ENCODE measurements at regions of chr14 and their contacts with region 1.

Region 1: DNA sequence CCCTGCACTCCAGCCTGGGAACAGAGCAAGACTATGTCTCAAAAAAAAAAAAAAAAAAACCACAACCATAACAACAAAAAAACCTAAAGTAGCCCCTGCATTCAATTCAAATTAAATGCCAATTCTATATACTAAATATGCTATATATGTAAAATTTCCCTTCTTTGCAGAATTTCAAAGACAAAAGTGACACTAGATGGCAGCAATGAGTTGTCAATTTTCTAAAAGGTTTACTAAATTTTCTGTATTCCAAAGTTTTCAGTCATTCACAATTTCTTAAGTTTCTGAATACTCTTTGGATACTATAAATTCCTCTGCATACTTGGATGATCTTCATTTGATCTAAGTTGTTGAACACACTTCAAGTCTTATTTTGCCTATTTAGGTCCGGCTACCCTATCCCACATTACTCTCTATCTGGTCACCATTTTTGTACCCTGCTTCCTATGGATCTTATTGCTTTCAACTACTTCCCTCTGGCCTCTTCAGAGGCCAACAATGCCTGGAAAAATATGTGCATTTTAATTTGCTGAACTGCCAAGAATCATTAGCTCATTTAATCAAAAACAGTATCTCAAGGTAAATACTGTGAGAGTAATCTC is 27.9 kb downstream of the HNRNPC start:
- DNase-seq: no peak
- ATAC-seq: no peak
- H3K4me3 Mint-ChIP-seq: no peak overlapping the region
- H3K27ac Mint-ChIP-seq: no peak overlapping the region
- H3K4me1 Mint-ChIP-seq: peaks cover 48% of the 10 kb centered on the region
- H3K27me3 Mint-ChIP-seq: no peaks in the 10 kb centered on the region
- CTCF ChIP-seq: no peak

Region 2: GRCh38 chr14:21203470-21204166 is 37.7 kb before region 1 on chr14:
- CTCF ChIA-PET with region 1: no interaction called
- POLR2A ChIA-PET with region 1: no interaction called
- intact Hi-C with region 1: no loop called
- DNase-seq: no peak
- ATAC-seq: no peak
- H3K4me3 Mint-ChIP-seq: no peak overlapping the region
- H3K27ac Mint-ChIP-seq: peak overlapping the region; percentile 30
- H3K4me1 Mint-ChIP-seq: peaks cover 6% of the 10 kb centered on the region
- H3K27me3 Mint-ChIP-seq: no peaks in the 10 kb centered on the region
- CTCF ChIP-seq: no peak

Region 3: DNA sequence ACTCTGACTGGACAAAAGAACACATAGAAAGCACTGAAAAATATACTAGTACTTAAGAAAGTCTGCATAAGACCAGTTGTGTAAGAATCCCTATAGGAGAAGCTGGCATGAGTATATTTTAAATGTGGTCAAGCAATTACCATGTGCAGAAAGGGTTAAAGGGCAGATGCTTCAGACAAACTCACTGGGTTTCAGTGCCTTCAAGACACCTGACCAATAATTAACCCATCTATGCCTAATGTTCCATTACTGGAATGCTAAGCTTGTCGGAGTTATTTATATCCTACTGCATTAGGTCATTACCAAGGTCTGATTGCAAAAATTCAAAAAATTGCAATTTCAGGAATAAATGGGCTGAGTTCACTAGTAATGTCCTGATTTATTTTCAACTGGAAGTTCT is 13.3 kb before region 1 on chr14:
- CTCF ChIA-PET with region 1: no interaction called
- POLR2A ChIA-PET with region 1: no interaction called
- intact Hi-C with region 1: loop called (anchors 1 kb)
- DNase-seq: no peak
- ATAC-seq: no peak
- H3K4me3 Mint-ChIP-seq: no peak overlapping the region
- H3K27ac Mint-ChIP-seq: no peak overlapping the region
- H3K4me1 Mint-ChIP-seq: peaks cover 28% of the 10 kb centered on the region
- H3K27me3 Mint-ChIP-seq: no peaks in the 10 kb centered on the region
- CTCF ChIP-seq: no peak

Region 4: GRCh38 chr14:21257394-21257909 is 16.1 kb after region 1 on chr14:
- CTCF ChIA-PET with region 1: no interaction called
- POLR2A ChIA-PET with region 1: interaction called, 16 read pairs
- intact Hi-C with region 1: loop called (anchors 2 kb)
- DNase-seq: no peak
- ATAC-seq: no peak
- H3K4me3 Mint-ChIP-seq: peak overlapping the region; percentile 33
- H3K27ac Mint-ChIP-seq: peak overlapping the region; percentile 47
- H3K4me1 Mint-ChIP-seq: peaks cover 63% of the 10 kb centered on the region
- H3K27me3 Mint-ChIP-seq: no peaks in the 10 kb centered on the region
- CTCF ChIP-seq: no peak

Region 5: DNA sequence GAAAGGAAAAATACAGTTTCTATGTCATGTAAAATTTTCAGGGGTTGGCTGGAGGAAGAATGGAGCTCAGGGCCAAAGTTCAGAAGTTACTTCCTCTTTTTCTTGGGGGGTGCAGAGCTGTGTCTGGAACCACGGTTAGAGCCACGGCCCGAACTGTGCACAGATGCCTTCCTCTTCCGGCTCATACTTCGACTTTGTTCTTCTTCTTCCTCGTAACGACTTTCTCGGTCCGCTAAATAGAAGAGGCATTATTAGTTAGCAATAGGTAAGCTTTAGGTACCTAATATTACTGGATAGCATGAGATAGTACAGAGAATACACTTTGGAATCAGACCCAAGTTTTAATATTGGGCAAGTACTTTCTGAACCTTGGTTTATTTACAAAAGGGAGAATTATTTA is 111.3 kb after region 1 on chr14:
- CTCF ChIA-PET with region 1: no interaction called
- POLR2A ChIA-PET with region 1: no interaction called
- intact Hi-C with region 1: loop called (anchors 2 kb)
- DNase-seq: no peak
- ATAC-seq: peak; percentile 94
- H3K4me3 Mint-ChIP-seq: peak overlapping the region; percentile 61
- H3K27ac Mint-ChIP-seq: peak overlapping the region; percentile 87
- H3K4me1 Mint-ChIP-seq: peaks cover 17% of the 10 kb centered on the region
- H3K27me3 Mint-ChIP-seq: no peaks in the 10 kb centered on the region
- CTCF ChIP-seq: no peak

Region 6: GRCh38 chr14:21395444-21395843 is 154.1 kb after region 1 on chr14:
- CTCF ChIA-PET with region 1: interaction called, 3 read pairs
- POLR2A ChIA-PET with region 1: no interaction called
- intact Hi-C with region 1: loop called (anchors 5 kb)
- DNase-seq: no peak
- ATAC-seq: no peak
- H3K4me3 Mint-ChIP-seq: no peak overlapping the region
- H3K27ac Mint-ChIP-seq: no peak overlapping the region
- H3K4me1 Mint-ChIP-seq: no peaks in the 10 kb centered on the region
- H3K27me3 Mint-ChIP-seq: no peaks in the 10 kb centered on the region
- CTCF ChIP-seq: no peak